Kidney (tissue), 22 donors: ENCODE measurements at regions of chr15 and their contacts with region 1.

Region 1: DNA sequence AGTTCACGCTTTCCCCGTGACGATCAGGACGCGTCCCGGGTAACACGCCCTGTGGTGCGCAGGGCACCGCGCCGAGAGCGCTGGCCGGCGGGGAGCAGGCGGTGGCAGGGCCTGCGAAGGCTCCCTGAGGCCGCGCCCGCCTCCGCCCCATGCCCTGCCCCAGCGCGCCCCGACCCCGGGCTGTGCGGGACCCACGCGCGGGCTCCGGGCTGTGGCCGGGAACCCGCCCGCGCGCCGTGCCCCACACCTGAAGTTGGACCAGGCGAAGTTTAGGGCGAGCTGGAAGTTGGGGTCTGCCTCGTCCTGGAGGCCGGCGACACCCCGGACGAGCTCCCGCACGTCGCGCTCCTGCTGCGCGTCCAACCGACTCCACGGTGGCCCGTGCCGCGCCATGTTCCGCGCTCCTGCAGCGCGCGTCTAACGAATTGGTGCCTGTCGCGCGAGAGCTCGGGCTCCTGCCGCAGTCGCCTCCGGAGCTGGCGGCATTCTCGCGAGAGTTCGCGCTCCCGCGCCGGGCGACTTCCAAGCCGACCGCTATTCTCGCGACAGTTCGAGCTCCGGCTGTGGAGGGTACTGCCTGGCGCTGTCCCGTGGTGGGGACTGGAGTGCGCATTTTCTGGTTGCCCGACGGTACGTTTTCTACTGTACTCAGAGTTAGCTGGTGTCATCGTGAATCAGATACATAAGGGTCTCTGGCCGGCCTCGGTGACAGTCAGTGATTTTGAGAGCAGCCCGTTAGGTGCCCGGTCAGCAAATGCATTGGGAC is at the start of gene TUBGCP5:
- DNase-seq: peak; percentile 99
- H3K4me3 ChIP-seq: peak within 1 kb of the TSS; percentile 87 to 92 (median 88)
- H3K27ac ChIP-seq: peak within 1 kb of the TSS in 1 of 2 donors; percentile 14
- H3K4me1 ChIP-seq: peaks cover 0 to 4% (median 0%) of the 10 kb centered on the region in 3 donors
- H3K27me3 ChIP-seq: no peaks in the 10 kb centered on the region
- CTCF ChIP-seq: peak; percentile 46
- total RNA-seq, gene TUBGCP5: 19.1 TPM

Region 2: GRCh38 chr15:22952796-22953579 is 86.3 kb before region 1 on chr15:
- intact Hi-C with region 1: loop called (anchors 10 kb)
- DNase-seq: no peak
- H3K4me3 ChIP-seq: no peak overlapping the region
- H3K27ac ChIP-seq: no peak overlapping the region
- H3K4me1 ChIP-seq: peaks cover 0 to 12% (median 6%) of the 10 kb centered on the region in 3 donors
- H3K27me3 ChIP-seq: no peaks in the 10 kb centered on the region
- CTCF ChIP-seq: no peak